Activated CD4-positive, alpha-beta T cell treated with anti-CD3 and anti-CD28 coated beads for 36 hours (primary cell): ENCODE measurements at regions of chr12 and their contacts with region 1.

Region 1: GRCh38 chr12:42372154-42372791 is 46.3 kb downstream of the PPHLN1 start:
- DNase-seq: peak; percentile 22
- ATAC-seq: peak; percentile 90
- H3K4me3 Mint-ChIP-seq: no peak overlapping the region
- H3K27ac Mint-ChIP-seq: no peak overlapping the region
- H3K4me1 Mint-ChIP-seq: peaks cover 5% of the 10 kb centered on the region
- H3K27me3 Mint-ChIP-seq: no peaks in the 10 kb centered on the region

Region 2: GRCh38 chr12:41277116-41277945 is 1094.9 kb before region 1 on chr12:
- CTCF ChIA-PET with region 1: no interaction called
- POLR2A ChIA-PET with region 1: no interaction called
- intact Hi-C with region 1: loop called (anchors 5 to 10 kb)
- DNase-seq: peak; percentile 30
- ATAC-seq: no peak
- H3K4me3 Mint-ChIP-seq: no peak overlapping the region
- H3K27ac Mint-ChIP-seq: no peak overlapping the region
- H3K4me1 Mint-ChIP-seq: no peaks in the 10 kb centered on the region
- H3K27me3 Mint-ChIP-seq: peaks cover 9% of the 10 kb centered on the region

Region 3: DNA sequence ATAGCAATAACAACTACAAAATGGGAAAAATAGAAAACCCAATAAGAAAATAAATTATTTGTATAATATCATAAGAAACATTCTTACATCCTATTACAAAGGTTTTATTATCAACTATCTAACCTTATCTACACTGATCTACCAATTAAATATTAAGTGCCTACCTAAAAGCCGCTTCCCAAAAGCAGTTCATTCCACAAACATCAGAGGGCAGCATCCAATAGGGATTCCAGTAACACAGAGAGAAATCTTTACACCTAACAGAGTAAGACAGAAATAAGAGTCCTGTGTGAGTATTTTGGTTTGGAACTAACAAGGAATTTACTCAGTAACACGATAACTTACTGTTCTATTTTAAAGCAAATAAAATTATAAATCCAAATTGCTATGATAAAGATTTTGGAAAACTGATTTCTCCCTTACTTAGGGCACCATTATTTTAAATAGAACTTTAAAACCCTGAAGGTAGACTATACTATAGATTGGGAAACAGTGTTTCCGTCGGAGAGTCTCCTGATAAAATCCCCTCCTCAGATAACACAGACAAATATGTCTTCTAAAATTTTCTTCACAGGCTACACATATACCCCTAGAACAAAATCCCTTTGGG is 242.6 kb before region 1 on chr12:
- CTCF ChIA-PET with region 1: interaction called, 6 read pairs
- POLR2A ChIA-PET with region 1: no interaction called
- intact Hi-C with region 1: loop called (anchors 1 to 5 kb)
- DNase-seq: no peak
- ATAC-seq: no peak
- H3K4me3 Mint-ChIP-seq: no peak overlapping the region
- H3K27ac Mint-ChIP-seq: no peak overlapping the region
- H3K4me1 Mint-ChIP-seq: peaks cover 53% of the 10 kb centered on the region
- H3K27me3 Mint-ChIP-seq: no peaks in the 10 kb centered on the region

Region 4: DNA sequence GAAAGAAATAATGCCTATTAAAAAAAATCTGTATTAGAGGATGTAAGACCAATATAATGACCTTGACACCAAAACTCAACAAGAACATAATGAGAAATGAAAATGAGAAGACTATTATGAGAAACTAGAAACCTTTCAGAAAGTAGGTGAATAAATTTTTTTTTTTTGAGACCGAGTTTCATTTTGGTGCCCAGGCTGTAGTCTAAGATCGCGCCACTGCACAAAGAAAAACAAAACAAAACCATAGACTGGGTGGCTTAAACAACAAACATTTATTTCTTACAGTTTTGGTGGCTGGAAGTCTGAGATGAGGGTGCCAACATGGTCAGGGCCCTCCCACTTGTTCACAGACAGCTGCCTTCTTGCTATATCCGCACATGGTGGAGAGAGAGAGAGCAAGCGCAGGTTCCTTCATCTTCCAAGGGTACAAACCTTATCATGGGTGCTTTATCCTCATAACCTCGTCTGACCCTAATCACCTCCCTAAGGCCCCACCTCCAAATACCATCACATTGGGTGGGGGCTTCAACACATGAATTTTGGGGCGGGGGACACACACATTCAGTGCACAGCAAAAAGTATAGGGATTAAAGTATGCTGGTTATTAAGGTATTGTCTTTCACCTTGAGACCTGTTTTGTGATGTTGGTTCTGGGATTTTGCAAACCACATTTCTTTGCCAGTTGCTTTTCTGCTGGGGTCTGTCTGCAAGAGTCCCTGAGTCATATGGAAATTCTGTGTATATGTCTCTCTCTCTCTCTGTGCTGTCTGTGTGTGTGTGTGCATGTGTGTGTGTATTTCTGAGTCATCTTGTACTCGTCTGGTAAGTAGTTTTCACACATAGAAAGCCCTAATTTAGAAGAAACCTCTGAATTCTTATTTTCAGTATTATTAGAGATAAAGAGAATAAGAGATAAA is 72.6 kb before region 1 on chr12:
- CTCF ChIA-PET with region 1: interaction called, 10 read pairs
- POLR2A ChIA-PET with region 1: no interaction called
- intact Hi-C with region 1: loop called in 1 of 2 experiments (anchors 1 kb)
- DNase-seq: peak; percentile 88
- ATAC-seq: peak; percentile 95
- H3K4me3 Mint-ChIP-seq: peak overlapping the region; percentile 1
- H3K27ac Mint-ChIP-seq: peak overlapping the region; percentile 77
- H3K4me1 Mint-ChIP-seq: peaks cover 17% of the 10 kb centered on the region
- H3K27me3 Mint-ChIP-seq: no peaks in the 10 kb centered on the region

Region 5: DNA sequence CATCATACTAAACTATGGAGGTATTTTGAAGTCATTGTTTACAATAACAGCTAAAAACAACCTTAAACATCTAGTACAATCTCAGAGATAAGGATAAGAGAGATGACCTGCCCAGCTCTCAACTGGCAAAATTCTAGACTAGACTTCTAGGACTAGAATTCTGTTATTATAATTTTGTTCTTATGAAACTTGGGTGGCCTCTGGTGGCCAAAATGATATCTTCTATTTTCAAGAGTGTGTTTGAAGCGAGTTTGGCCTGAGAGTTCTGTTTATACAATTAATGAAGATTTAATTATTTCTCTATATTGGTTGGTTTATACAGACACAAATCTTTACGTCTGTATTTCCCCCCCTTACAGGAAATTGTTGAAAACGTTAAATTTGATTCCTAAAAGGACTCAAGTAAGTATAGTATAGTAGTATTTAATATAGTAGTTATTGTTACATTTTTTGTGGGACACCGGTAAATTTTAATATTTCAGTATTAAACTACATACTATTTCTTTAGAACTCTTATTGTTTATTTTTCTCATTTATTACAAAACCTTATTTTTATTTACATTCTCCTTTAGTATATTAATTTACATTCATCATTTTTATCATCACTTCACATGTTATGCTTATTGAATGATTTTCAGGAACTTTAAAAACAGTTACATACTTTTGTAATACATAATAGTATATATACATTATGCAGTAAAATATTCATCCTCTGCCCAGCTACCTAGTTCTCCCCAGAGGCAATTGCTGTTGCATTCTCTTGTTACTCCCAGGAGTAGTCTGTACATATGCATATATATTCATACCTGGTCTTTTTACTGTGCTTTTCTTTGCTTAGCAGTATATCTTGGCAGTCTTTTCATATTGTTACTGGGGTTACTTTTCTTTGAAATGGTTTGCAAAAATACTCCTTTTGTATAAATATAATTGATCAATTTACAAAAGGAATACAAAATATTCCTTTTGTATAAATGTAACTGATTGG is 39.7 kb before region 1 on chr12:
- CTCF ChIA-PET with region 1: interaction called, 10 read pairs
- POLR2A ChIA-PET with region 1: no interaction called
- intact Hi-C with region 1: loop called in 1 of 2 experiments (anchors 5 kb)
- DNase-seq: peak; percentile 32
- ATAC-seq: peak; percentile 44
- H3K4me3 Mint-ChIP-seq: no peak overlapping the region
- H3K27ac Mint-ChIP-seq: no peak overlapping the region
- H3K4me1 Mint-ChIP-seq: peaks cover 63% of the 10 kb centered on the region
- H3K27me3 Mint-ChIP-seq: no peaks in the 10 kb centered on the region

Region 6: DNA sequence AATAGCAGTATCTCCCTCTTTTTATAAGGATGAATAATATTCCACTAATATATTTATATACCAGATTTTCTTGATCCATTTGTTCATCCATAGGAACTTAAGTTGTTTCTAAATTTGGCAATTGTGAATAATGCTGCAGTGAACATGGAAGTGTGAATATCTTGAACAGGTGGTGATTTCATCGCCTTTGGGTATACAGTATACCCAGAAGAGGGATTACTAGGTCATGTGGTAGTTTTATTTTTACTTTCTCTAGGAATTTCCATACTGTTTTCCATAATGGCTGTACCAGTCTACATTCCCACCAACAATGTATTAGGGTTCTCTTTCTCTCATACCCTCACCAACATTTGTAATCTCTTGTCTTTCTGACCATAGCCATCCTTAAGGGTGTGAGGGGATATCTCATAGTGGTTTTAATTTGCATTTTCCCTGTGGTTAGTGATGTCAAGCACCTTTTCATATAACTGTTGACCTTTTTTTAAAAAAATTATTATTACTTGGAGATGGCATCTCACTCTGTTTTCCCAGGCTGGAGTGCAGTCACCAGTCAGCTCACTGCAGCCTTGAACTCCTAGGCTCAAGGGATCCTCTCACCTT is 25.8 kb before region 1 on chr12:
- CTCF ChIA-PET with region 1: interaction called, 11 read pairs
- POLR2A ChIA-PET with region 1: no interaction called
- intact Hi-C with region 1: loop called in 1 of 2 experiments (anchors 2 kb)
- DNase-seq: no peak
- ATAC-seq: no peak
- H3K4me3 Mint-ChIP-seq: no peak overlapping the region
- H3K27ac Mint-ChIP-seq: no peak overlapping the region
- H3K4me1 Mint-ChIP-seq: peaks cover 31% of the 10 kb centered on the region
- H3K27me3 Mint-ChIP-seq: no peaks in the 10 kb centered on the region